Sciatic nerve (tissue), 2 donors: ENCODE measurements at regions of chr4 and their contacts with region 1.

Region 1: GRCh38 chr4:81412946-81413495 is 58.7 kb downstream of the RASGEF1B start:
- DNase-seq: no peak
- ATAC-seq: no peak

Region 2: GRCh38 chr4:82865592-82865991 is 1452.6 kb after region 1 on chr4:
- intact Hi-C with region 1: loop called (anchors 10 kb)
- DNase-seq: no peak
- ATAC-seq: no peak